Heart right ventricle (tissue), 16 donors: ENCODE measurements at regions of chr6 and their contacts with region 1.

Region 1: DNA sequence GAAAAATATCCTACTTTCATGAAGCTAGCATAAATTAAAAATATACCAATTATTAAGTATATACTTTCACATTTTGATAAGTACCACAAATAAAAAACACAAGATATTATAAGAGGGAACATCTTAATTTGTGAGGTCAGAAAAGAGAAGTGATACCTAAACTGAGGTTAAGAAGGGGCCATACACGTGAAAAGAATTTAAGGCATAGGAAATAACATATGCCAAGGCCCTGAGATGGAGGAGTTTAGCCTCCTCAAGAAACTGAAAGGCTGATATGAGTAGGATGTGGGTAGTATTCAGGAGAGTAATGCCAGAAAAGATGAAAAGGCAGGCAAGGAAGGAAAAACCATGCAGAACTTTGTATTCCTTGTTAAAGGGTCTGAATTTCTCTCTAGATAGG is 116.6 kb upstream of the HTR1E start:
- DNase-seq: no peak
- ATAC-seq: no peak
- H3K4me3 ChIP-seq: no peak overlapping the region
- H3K27ac ChIP-seq: no peak overlapping the region
- H3K4me1 ChIP-seq: no peaks in the 10 kb centered on the region
- H3K27me3 ChIP-seq: no peaks in the 10 kb centered on the region
- CTCF ChIP-seq: no peak

Region 2: DNA sequence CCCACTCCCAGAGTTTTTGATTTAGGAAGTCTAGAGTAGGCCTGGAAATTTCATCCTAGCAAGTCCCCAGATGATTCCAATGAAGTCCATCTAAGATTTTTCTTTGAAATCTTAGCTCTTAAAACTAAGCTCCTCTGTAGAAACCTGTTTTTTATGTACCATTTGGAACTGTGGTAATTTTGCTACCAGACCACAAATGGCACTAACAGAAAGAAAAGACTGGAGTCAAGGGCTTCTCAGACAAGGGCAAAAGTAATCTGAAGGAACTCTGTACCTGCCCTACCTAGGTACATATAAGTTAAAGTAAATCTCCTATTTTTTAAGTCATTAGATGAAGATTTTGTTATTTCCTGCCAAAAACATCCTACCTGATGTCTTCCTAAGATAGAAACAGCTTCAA is 38.4 kb before region 1 on chr6:
- intact Hi-C with region 1: loop called in 1 of 10 experiments (anchors 2 kb)
- DNase-seq: no peak
- ATAC-seq: no peak
- H3K4me3 ChIP-seq: no peak overlapping the region
- H3K27ac ChIP-seq: no peak overlapping the region
- H3K4me1 ChIP-seq: no peaks in the 10 kb centered on the region
- H3K27me3 ChIP-seq: no peaks in the 10 kb centered on the region
- CTCF ChIP-seq: no peak